ENCODE measurements at regions of chr20 and their contacts with region 1.

Region 1: GRCh38 chr20:34676642-34677373 is at the start of gene PIGU:
- DNase-seq: peak; percentile 97
- H3K4me3 Mint-ChIP-seq: peak within 1 kb of the TSS; percentile 97
- H3K27ac Mint-ChIP-seq: peak within 1 kb of the TSS; percentile 97
- H3K4me1 Mint-ChIP-seq: peaks cover 27% of the 10 kb centered on the region
- H3K27me3 Mint-ChIP-seq: no peaks in the 10 kb centered on the region
- total RNA-seq, gene PIGU: 24.8 and 25.9 TPM in 2 replicates

Region 2: DNA sequence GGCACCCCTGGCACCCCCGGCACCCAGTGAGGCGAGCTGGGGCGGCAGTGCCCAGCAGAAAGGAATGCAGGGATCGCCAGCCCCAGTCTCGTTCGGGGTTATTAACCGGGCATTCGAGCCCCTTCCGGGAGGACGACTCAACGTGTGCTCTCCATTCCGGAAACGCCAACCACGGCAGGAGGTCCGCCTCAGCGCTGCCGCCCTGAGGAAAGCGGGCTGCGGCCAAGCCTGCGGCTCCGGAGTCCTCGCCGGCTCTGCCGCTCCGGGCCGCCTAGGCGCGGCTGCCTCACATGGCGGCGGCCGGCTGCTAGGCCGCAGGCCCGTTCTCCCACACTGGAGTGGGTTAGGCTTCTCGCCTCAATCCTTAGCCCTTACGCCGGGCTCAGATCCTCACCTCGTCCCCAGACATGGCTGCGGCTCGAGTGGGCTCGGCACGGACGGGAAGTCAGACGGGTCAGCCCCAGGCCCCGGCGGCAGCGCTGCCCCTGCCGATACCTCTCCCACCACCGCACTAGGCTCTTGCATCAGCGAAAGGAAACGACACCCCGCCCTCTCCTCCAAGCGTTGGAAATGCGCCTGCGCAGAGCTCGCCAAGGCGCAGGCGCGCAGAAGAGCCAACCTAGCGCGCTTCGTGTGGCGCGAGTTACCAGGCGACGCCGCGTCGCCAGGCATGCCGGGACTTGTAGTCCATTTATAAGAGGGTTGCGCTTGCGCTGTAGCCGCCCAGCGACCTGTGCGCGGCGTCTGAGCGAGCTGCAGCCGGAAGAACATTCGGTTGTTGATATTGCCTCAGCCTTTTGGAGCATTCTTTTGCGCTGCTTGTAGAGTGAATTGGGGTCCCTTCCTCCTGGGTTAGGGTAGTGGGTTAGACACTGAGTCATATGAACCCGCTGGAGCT is 564.9 kb before region 1 on chr20 and contains the start of gene EIF2S2:
- intact Hi-C with region 1: loop called (anchors 1 kb)
- DNase-seq: peak; percentile 96
- H3K4me3 Mint-ChIP-seq: peak within 1 kb of the TSS; percentile 88
- H3K27ac Mint-ChIP-seq: peak within 1 kb of the TSS; percentile 98
- H3K4me1 Mint-ChIP-seq: peaks cover 46% of the 10 kb centered on the region
- H3K27me3 Mint-ChIP-seq: peaks cover 1% of the 10 kb centered on the region
- total RNA-seq, gene EIF2S2: 99.8 and 105 TPM in 2 replicates

Region 3: GRCh38 chr20:34250005-34250404 is 426.8 kb before region 1 on chr20:
- intact Hi-C with region 1: no loop called
- DNase-seq: no peak
- H3K4me3 Mint-ChIP-seq: no peak overlapping the region
- H3K27ac Mint-ChIP-seq: no peak overlapping the region
- H3K4me1 Mint-ChIP-seq: peaks cover 12% of the 10 kb centered on the region
- H3K27me3 Mint-ChIP-seq: no peaks in the 10 kb centered on the region

Region 4: GRCh38 chr20:34363062-34363464 is 313.7 kb before region 1 on chr20 and contains the start of gene ITCH:
- intact Hi-C with region 1: loop called (anchors 1 kb)
- DNase-seq: peak; percentile 91
- H3K4me3 Mint-ChIP-seq: peak within 1 kb of the TSS; percentile 100
- H3K27ac Mint-ChIP-seq: peak within 1 kb of the TSS; percentile 100
- H3K4me1 Mint-ChIP-seq: peaks cover 26% of the 10 kb centered on the region
- H3K27me3 Mint-ChIP-seq: no peaks in the 10 kb centered on the region
- total RNA-seq, gene ITCH: 55.6 and 66.4 TPM in 2 replicates

Region 5: DNA sequence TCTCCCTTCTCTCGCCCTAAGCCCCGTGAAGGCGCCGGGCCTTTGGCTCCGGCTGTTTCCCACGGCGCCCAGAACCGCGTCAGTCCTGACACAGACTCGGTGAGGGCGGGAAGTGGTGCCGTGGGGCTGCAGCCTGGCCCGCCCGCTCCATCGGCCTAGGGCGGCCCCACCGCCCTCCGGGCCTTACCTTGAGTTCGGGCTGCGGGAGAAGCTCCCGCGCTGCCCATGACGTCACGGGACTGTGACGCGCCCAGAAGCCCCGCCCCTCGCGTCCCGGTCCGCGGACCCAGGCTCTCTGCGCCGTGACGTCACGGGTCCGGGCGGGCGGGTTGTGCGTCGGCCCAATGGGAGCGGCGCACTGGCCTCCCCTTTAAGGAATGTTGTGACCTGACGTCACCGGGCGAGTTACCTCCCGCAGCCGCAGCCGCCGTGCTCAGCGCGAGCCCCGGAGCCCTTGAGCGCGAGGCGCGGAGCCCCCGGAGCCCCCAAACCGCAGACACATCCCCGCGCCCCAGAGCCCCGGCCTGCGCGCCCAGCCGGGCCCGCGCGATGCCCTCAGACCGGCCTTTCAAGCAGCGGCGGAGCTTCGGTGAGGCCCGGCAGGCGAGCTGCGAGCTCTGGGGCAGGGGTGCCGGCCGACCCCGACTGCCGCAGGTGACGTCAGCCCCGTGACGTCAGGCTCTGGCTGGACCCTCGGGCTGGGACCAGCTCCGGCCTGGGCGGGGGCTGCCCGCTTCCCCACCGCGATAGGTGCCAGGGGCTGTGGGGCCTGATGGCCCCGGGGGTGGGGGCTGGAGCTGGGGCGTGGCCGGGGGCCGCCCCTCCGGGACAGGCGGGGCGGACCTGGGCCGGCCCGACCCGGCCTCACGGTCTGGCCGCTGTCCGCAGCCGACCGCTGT is 118.2 kb before region 1 on chr20 and contains the start of gene MAP1LC3A:
- intact Hi-C with region 1: loop called (anchors 1 kb)
- DNase-seq: peak; percentile 92
- H3K4me3 Mint-ChIP-seq: peak within 1 kb of the TSS; percentile 83
- H3K27ac Mint-ChIP-seq: peak within 1 kb of the TSS; percentile 78
- H3K4me1 Mint-ChIP-seq: peaks cover 12% of the 10 kb centered on the region
- H3K27me3 Mint-ChIP-seq: no peaks in the 10 kb centered on the region
- total RNA-seq, gene MAP1LC3A: 6.1 and 7.3 TPM in 2 replicates

Region 6: DNA sequence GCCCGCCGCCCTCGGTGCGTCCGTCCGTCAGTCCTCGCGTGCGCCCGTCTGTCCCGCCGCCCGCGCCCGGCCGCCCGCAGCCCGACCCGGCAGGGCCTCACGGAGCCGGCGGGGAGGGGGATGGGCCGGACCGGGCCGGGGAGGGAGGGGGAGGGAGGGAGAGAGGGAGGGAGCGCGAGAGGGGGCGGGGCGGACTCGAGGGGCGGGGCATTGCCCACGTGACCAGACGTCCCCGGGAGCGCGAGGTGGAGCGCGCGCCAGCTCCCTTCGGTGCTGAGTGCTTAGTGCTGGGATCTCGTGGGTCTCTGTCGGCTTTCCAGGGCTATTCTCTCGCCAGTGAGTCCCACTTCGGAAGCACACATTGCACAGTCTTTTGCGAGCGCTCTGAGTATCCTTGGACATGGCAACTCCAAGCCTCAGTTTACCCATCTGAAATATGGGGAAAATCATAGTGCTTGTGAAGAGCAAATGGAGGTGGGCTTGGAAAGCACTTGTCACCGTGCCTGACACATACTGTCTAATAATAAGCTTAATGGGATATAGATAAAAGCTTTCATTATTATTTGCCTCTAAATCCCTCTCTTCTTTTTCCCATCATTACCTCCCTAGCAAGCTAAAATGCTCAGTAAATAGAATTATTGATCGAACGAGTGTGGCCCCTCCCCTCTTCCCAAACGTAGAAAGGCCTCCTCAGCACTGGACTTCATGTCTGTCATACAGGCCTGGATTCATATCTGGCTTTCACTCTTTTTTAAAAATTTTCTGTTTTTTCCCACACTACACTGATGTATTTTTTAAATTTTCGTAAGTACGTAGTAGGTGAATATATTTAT is 148.9 kb after region 1 on chr20 and contains the start of gene NCOA6:
- intact Hi-C with region 1: loop called (anchors 1 kb)
- DNase-seq: peak; percentile 68
- H3K4me3 Mint-ChIP-seq: peak within 1 kb of the TSS; percentile 97
- H3K27ac Mint-ChIP-seq: peak within 1 kb of the TSS; percentile 91
- H3K4me1 Mint-ChIP-seq: peaks cover 30% of the 10 kb centered on the region
- H3K27me3 Mint-ChIP-seq: peaks cover 13% of the 10 kb centered on the region
- total RNA-seq, gene NCOA6: 25.5 and 29.1 TPM in 2 replicates

Region 7: GRCh38 chr20:35306931-35307517 is 630.2 kb after region 1 on chr20:
- intact Hi-C with region 1: no loop called
- DNase-seq: no peak
- H3K4me3 Mint-ChIP-seq: no peak overlapping the region
- H3K27ac Mint-ChIP-seq: peak overlapping the region; percentile 1
- H3K4me1 Mint-ChIP-seq: peaks cover 42% of the 10 kb centered on the region
- H3K27me3 Mint-ChIP-seq: no peaks in the 10 kb centered on the region

Measured in activated T-helper 1 cell treated with anti-CD3 and anti-CD28 coated beads, Interleukin-12 subunit alpha, Interleukin-12 subunit beta, Interleukin-2, Interleukin-4 antibody, amounts not matched to agents 30 ng/mL and 10 ng/mL and 1 ng/mL, durations not matched to agents 14 hours and 24 hours and 36 hours (primary cell).